ENCODE measurements at regions of chr16 and their contacts with region 1.

Region 1: GRCh38 chr16:69424053-69424934 is at the start of gene CYB5B:
- DNase-seq: peak; percentile 95
- H3K4me3 ChIP-seq: peak within 1 kb of the TSS; percentile 76 to 89 (median 83)
- H3K27ac ChIP-seq: peak within 1 kb of the TSS; percentile 65 to 89 (median 84)
- H3K4me1 ChIP-seq: peaks cover 17 to 34% (median 24%) of the 10 kb centered on the region in 6 donors
- H3K27me3 ChIP-seq: no peaks in the 10 kb centered on the region
- CTCF ChIP-seq: peak in 4 of 11 experiments; percentile 12 to 28 (median 16)
- POLR2A ChIP-seq: peak; percentile 25 to 75 (median 53)
- total RNA-seq, gene CYB5B: 45.2 to 80.5 (median 71.3) TPM

Region 2: GRCh38 chr16:69186642-69187445 is 237.4 kb before region 1 on chr16 and contains the start of gene SNTB2:
- intact Hi-C with region 1: no loop called
- DNase-seq: peak; percentile 98
- H3K4me3 ChIP-seq: peak within 1 kb of the TSS; percentile 73 to 88 (median 80)
- H3K27ac ChIP-seq: peak within 1 kb of the TSS; percentile 88 to 98 (median 95)
- H3K4me1 ChIP-seq: peaks cover 14 to 76% (median 52%) of the 10 kb centered on the region in 6 donors
- H3K27me3 ChIP-seq: no peaks in the 10 kb centered on the region
- CTCF ChIP-seq: no peak
- POLR2A ChIP-seq: peak in 2 of 3 donors; percentile 33 to 83
- total RNA-seq, gene SNTB2: 25.7 to 48.5 (median 31.5) TPM

Region 3: GRCh38 chr16:69565671-69566239 is 141.5 kb after region 1 on chr16 and contains the start of gene NFAT5:
- intact Hi-C with region 1: loop called (anchors 10 kb)
- DNase-seq: peak; percentile 97
- H3K4me3 ChIP-seq: peak within 1 kb of the TSS; percentile 59 to 92 (median 84)
- H3K27ac ChIP-seq: peak within 1 kb of the TSS; percentile 93 to 99 (median 98)
- H3K4me1 ChIP-seq: peaks cover 31 to 67% (median 58%) of the 10 kb centered on the region in 6 donors
- H3K27me3 ChIP-seq: no peaks in the 10 kb centered on the region
- CTCF ChIP-seq: peak in 2 of 11 experiments; percentile 20 to 21
- POLR2A ChIP-seq: peak; percentile 41 to 99 (median 90)
- total RNA-seq, gene NFAT5: 50.5 to 96.8 (median 60.9) TPM

Region 4: GRCh38 chr16:69709456-69710084 is 285.3 kb after region 1 on chr16:
- intact Hi-C with region 1: no loop called
- DNase-seq: no peak
- H3K4me3 ChIP-seq: no peak overlapping the region
- H3K27ac ChIP-seq: peak overlapping the region in 3 of 8 donors; percentile 21 to 28 (median 22)
- H3K4me1 ChIP-seq: peaks cover 0 to 4% (median 0%) of the 10 kb centered on the region in 6 donors
- H3K27me3 ChIP-seq: no peaks in the 10 kb centered on the region
- CTCF ChIP-seq: peak; percentile 37 to 82 (median 73)
- POLR2A ChIP-seq: no peak